ENCODE measurements at regions of chr13 and their contacts with region 1.

Region 1: DNA sequence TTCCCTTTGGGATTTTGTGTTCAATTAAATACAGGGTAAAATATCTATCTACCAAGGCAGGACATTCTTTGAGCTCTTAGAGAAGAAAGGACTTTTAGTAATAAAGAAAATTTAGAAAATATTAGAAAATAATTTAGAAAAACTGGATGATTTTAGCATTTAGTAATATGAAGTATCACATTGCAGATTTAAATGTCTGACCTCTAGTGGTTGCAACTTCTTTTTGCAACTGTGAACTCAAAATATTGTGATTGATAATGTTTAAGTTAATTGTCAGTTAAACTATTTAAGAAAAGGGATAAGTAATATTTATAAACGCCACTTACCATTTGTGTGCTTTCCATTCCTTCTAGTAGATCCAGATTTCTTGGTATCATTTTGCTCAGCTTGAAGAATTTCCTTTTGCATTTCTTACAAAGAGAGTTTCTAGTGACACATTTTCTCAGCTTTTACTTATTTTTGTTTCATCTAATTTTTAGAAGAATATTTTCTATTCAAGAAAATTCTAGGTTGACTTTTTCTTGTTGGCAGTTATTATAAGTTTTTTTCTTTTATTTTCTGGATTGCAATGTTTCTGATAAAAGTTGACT is 10.3 kb upstream of the POSTN start:
- DNase-seq: no peak
- ATAC-seq: no peak
- H3K4me3 ChIP-seq: no peak overlapping the region
- H3K27ac ChIP-seq: no peak overlapping the region
- H3K4me1 ChIP-seq: no peaks in the 10 kb centered on the region
- H3K27me3 ChIP-seq: no peaks in the 10 kb centered on the region
- CTCF ChIP-seq: peak; percentile 11

Region 2: GRCh38 chr13:37412241-37412921 is 196.5 kb before region 1 on chr13:
- intact Hi-C with region 1: no loop called
- DNase-seq: no peak
- ATAC-seq: no peak
- H3K4me3 ChIP-seq: no peak overlapping the region
- H3K27ac ChIP-seq: no peak overlapping the region
- H3K4me1 ChIP-seq: no peaks in the 10 kb centered on the region
- H3K27me3 ChIP-seq: no peaks in the 10 kb centered on the region
- CTCF ChIP-seq: no peak

Region 3: GRCh38 chr13:37453246-37453645 is 155.6 kb before region 1 on chr13:
- intact Hi-C with region 1: loop called in 1 of 2 experiments (anchors 5 kb)
- DNase-seq: no peak
- ATAC-seq: no peak
- H3K4me3 ChIP-seq: no peak overlapping the region
- H3K27ac ChIP-seq: no peak overlapping the region
- H3K4me1 ChIP-seq: no peaks in the 10 kb centered on the region
- H3K27me3 ChIP-seq: no peaks in the 10 kb centered on the region
- CTCF ChIP-seq: no peak

Region 4: GRCh38 chr13:37495046-37495445 is 113.8 kb before region 1 on chr13:
- intact Hi-C with region 1: no loop called
- DNase-seq: no peak
- ATAC-seq: peak in 1 of 4 donors; percentile 57
- H3K4me3 ChIP-seq: no peak overlapping the region
- H3K27ac ChIP-seq: no peak overlapping the region
- H3K4me1 ChIP-seq: no peaks in the 10 kb centered on the region
- H3K27me3 ChIP-seq: no peaks in the 10 kb centered on the region
- CTCF ChIP-seq: no peak

Region 5: GRCh38 chr13:37510441-37510840 is 98.4 kb before region 1 on chr13:
- intact Hi-C with region 1: no loop called
- DNase-seq: no peak
- ATAC-seq: no peak
- H3K4me3 ChIP-seq: no peak overlapping the region
- H3K27ac ChIP-seq: no peak overlapping the region
- H3K4me1 ChIP-seq: no peaks in the 10 kb centered on the region
- H3K27me3 ChIP-seq: no peaks in the 10 kb centered on the region
- CTCF ChIP-seq: no peak

Region 6: GRCh38 chr13:39586151-39586550 is 1977.3 kb after region 1 on chr13:
- intact Hi-C with region 1: no loop called
- DNase-seq: no peak
- ATAC-seq: no peak
- H3K4me3 ChIP-seq: no peak overlapping the region
- H3K27ac ChIP-seq: no peak overlapping the region
- H3K4me1 ChIP-seq: no peaks in the 10 kb centered on the region
- H3K27me3 ChIP-seq: no peaks in the 10 kb centered on the region
- CTCF ChIP-seq: no peak

Measured in psoas muscle (tissue), 8 donors.